Activated CD8-positive, alpha-beta T cell treated with anti-CD3 and anti-CD28 coated beads, Interleukin-2, amount 10 ng/mL, durations not matched to agents 7 days and 5 days (primary cell): ENCODE measurements at regions of chr9 and their contacts with region 1.

Region 1: GRCh38 chr9:89428901-89429890 is 68.7 kb downstream of the SEMA4D start:
- DNase-seq: peak; percentile 79
- ATAC-seq: peak; percentile 20
- H3K4me3 Mint-ChIP-seq: no peak overlapping the region
- H3K27ac Mint-ChIP-seq: peak overlapping the region; percentile 88
- H3K4me1 Mint-ChIP-seq: peaks cover 95% of the 10 kb centered on the region
- H3K27me3 Mint-ChIP-seq: no peaks in the 10 kb centered on the region

Region 2: GRCh38 chr9:89052470-89053097 is 376.6 kb before region 1 on chr9:
- CTCF ChIA-PET with region 1: no interaction called
- POLR2A ChIA-PET with region 1: no interaction called
- DNase-seq: no peak
- ATAC-seq: no peak
- H3K4me3 Mint-ChIP-seq: no peak overlapping the region
- H3K27ac Mint-ChIP-seq: no peak overlapping the region
- H3K4me1 Mint-ChIP-seq: no peaks in the 10 kb centered on the region
- H3K27me3 Mint-ChIP-seq: peaks cover 9% of the 10 kb centered on the region

Region 3: GRCh38 chr9:89418882-89419640 is 10.1 kb before region 1 on chr9:
- CTCF ChIA-PET with region 1: interaction called, 21 read pairs
- POLR2A ChIA-PET with region 1: interaction called, 9 read pairs
- DNase-seq: peak; percentile 89
- ATAC-seq: peak; percentile 63
- H3K4me3 Mint-ChIP-seq: peak overlapping the region; percentile 74
- H3K27ac Mint-ChIP-seq: peak overlapping the region; percentile 88
- H3K4me1 Mint-ChIP-seq: peaks cover 96% of the 10 kb centered on the region
- H3K27me3 Mint-ChIP-seq: no peaks in the 10 kb centered on the region

Region 4: DNA sequence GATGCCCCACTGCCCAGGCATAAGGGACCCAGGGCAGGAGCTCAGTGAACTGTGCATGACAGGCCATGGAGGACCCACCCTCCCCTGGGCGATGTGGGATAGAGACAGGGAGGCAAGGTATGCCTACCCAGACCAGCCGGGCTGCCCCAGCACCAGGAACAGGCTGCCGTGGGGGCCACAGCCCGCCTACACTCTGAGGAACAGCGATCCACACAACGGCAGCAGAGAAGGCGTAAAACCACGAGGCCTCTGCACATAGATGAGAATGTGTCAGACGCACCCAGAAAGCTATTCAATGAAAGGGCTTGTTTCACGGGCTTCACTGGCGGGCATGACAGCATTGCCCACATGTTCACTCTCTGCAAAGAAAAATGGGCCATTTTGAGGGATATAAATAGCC is 19.2 kb after region 1 on chr9:
- CTCF ChIA-PET with region 1: interaction called, 38 read pairs
- POLR2A ChIA-PET with region 1: interaction called, 4 read pairs
- DNase-seq: peak; percentile 54
- ATAC-seq: peak; percentile 41
- H3K4me3 Mint-ChIP-seq: no peak overlapping the region
- H3K27ac Mint-ChIP-seq: peak overlapping the region; percentile 88
- H3K4me1 Mint-ChIP-seq: peaks cover 98% of the 10 kb centered on the region
- H3K27me3 Mint-ChIP-seq: no peaks in the 10 kb centered on the region

Region 5: DNA sequence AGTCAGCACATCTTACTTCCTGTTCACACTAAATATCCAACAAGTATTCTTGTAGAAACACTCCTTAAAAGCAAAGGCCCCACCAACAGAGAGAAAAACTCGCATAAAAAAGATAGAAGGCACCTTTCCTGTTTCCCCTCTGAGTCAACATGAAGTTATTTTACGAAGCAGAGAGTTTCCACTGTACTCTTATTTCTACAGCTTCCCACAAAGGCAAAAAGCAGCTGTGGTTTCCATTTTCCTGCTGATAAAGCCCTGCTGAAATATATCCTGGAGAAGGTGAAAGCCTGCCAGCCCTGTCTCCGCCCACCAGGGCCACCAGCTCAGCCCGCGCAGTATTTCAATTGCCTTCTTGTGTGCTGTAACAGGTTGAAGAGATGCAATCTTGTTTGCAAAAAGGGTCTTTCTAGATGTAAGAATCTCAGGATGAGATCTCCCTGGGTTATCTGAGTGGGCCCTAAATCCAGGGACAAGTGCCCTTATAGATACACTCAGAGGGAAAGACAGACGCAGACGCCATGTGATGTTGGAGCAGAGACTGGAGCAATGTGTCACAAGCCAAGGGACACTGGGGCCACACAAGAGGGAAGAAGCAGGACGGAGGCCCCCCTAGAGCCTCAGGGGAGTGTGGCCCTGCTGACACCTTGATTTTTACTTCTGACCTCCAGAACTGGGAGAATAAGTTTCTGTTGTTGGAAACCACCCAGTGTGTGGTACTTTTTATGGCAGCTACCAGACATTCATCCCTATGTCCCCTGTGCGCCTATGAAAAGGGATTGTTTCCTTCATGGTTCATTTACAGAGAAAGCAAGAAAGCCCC is 48.8 kb after region 1 on chr9:
- CTCF ChIA-PET with region 1: interaction called, 17 read pairs
- POLR2A ChIA-PET with region 1: interaction called, 9 read pairs
- DNase-seq: peak; percentile 67
- ATAC-seq: peak; percentile 57
- H3K4me3 Mint-ChIP-seq: peak overlapping the region; percentile 71
- H3K27ac Mint-ChIP-seq: peak overlapping the region; percentile 91
- H3K4me1 Mint-ChIP-seq: peaks cover 91% of the 10 kb centered on the region
- H3K27me3 Mint-ChIP-seq: no peaks in the 10 kb centered on the region

Region 6: DNA sequence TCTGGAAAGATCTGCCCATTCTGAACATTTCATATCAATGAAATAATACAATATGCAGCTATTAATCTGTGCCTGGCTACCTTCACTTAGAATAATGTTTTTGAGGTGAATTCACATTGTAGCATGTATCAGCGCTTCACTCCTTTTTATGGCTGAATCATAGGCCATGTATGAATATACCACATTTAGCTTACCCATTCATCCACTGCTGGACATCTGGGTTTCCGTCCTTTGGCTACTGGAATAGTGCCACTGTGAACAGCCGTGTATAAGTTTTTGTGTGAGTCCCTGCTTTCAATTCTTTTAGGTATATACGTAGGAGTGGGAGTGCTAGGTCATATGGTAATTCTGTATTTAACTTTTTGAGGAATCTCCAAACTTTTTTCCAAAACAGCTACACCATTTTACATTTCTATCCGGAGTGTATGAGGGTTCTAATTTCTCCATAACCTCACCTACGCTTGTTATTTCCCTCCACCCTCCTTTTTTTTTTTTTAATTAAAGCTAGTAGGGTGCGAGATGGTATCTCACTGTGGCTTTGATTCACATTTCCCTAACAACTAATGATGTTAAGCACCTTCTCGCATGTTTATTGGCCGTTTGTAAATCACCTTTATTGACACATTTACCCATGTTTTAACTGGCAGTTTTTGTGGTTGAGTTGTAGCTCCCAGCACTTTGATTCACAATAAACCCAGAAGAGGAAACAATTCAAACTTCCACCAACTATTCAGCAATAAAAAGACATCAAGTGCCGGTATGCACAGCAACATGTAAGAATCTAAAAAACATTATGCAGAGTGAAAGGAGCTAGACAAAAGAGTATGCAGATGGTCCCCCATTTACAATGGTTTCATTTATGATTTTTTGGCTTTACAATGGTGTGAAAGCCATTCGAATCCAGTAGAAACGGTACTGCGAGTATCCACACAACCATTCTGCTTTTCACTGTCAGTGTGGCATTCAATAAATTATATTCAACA is 60.6 kb after region 1 on chr9:
- CTCF ChIA-PET with region 1: interaction called, 13 read pairs
- POLR2A ChIA-PET with region 1: no interaction called
- DNase-seq: no peak
- ATAC-seq: peak; percentile 61
- H3K4me3 Mint-ChIP-seq: peak overlapping the region; percentile 52
- H3K27ac Mint-ChIP-seq: peak overlapping the region; percentile 81
- H3K4me1 Mint-ChIP-seq: peaks cover 95% of the 10 kb centered on the region
- H3K27me3 Mint-ChIP-seq: no peaks in the 10 kb centered on the region